CD8-positive, alpha-beta T cell (primary cell): ENCODE measurements at regions of chr16 and their contacts with region 1.

Region 1: GRCh38 chr16:67159593-67160406 is at the starts of genes FBXL8 and TRADD:
- DNase-seq: peak; percentile 53 to 90 (median 76)
- ATAC-seq: peak; percentile 69
- H3K4me3 ChIP-seq: peak within 1 kb of the TSS; percentile 94 to 97
- H3K4me3 Mint-ChIP-seq: peak within 1 kb of the TSS; percentile 89
- H3K27ac ChIP-seq: peak within 1 kb of the TSS; percentile 74 to 93
- H3K27ac Mint-ChIP-seq: peak within 1 kb of the TSS; percentile 95
- H3K4me1 ChIP-seq: peaks cover 72% of the 10 kb centered on the region
- H3K4me1 Mint-ChIP-seq: peaks cover 60% of the 10 kb centered on the region
- H3K27me3 ChIP-seq: peaks cover 13 to 33% of the 10 kb centered on the region in 2 experiments
- H3K27me3 Mint-ChIP-seq: peaks cover 20% of the 10 kb centered on the region
- CTCF ChIP-seq: peak; percentile 60
- total RNA-seq, gene FBXL8: 4.4 to 6.4 TPM
- total RNA-seq, gene TRADD: 15.5 to 17.1 TPM

Region 2: GRCh38 chr16:66947302-66948065 is 212.3 kb before region 1 on chr16:
- CTCF ChIA-PET with region 1: interaction called, 4 read pairs
- POLR2A ChIA-PET with region 1: no interaction called
- intact Hi-C with region 1: loop called (anchors 2 kb)
- DNase-seq: peak; percentile 67 to 90 (median 85)
- ATAC-seq: peak; percentile 94
- H3K4me3 ChIP-seq: peak overlapping the region; percentile 58 to 65
- H3K4me3 Mint-ChIP-seq: peak overlapping the region; percentile 89
- H3K27ac ChIP-seq: no peak overlapping the region
- H3K27ac Mint-ChIP-seq: no peak overlapping the region
- H3K4me1 ChIP-seq: peaks cover 17% of the 10 kb centered on the region
- H3K4me1 Mint-ChIP-seq: peaks cover 19% of the 10 kb centered on the region
- H3K27me3 ChIP-seq: peaks cover 0 to 19% of the 10 kb centered on the region in 2 experiments
- H3K27me3 Mint-ChIP-seq: peaks cover 22% of the 10 kb centered on the region
- CTCF ChIP-seq: peak; percentile 89

Region 3: DNA sequence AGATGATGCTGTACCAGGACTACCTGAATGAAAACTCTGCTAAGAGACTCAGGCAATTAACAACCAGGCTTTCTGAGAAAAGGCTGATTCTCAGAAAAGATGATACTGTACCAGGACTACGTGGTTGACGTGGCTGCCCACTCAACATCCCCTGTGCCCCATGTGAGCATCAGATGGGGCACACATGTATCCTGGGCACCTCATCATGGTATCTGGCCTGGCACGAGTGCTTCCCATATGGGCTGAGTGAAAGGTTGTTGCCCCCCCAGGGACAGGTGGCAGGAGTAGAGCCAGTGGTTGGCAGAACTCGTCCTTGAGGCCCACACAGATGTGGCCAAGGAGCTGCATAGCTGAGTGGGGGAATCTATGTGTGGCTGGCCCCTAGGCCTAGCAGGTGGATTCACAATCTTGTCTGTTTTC is 174.9 kb before region 1 on chr16:
- CTCF ChIA-PET with region 1: interaction called, 79 read pairs
- POLR2A ChIA-PET with region 1: no interaction called
- intact Hi-C with region 1: no loop called
- DNase-seq: peak in 1 of 9 experiments; percentile 16
- ATAC-seq: no peak
- H3K4me3 ChIP-seq: no peak overlapping the region
- H3K4me3 Mint-ChIP-seq: no peak overlapping the region
- H3K27ac ChIP-seq: peak overlapping the region in 1 of 2 experiments; percentile 71
- H3K27ac Mint-ChIP-seq: peak overlapping the region; percentile 25
- H3K4me1 ChIP-seq: peaks cover 15% of the 10 kb centered on the region
- H3K4me1 Mint-ChIP-seq: peaks cover 9% of the 10 kb centered on the region
- H3K27me3 ChIP-seq: no peaks in the 10 kb centered on the region
- H3K27me3 Mint-ChIP-seq: no peaks in the 10 kb centered on the region
- CTCF ChIP-seq: no peak

Region 4: GRCh38 chr16:67109407-67110135 is 50.2 kb before region 1 on chr16 and contains the start of gene PHAF1:
- CTCF ChIA-PET with region 1: interaction called, 11 read pairs
- POLR2A ChIA-PET with region 1: interaction called, 3 read pairs
- intact Hi-C with region 1: loop called (anchors 2 kb)
- DNase-seq: peak; percentile 91 to 99 (median 96)
- ATAC-seq: peak; percentile 93
- H3K4me3 ChIP-seq: peak within 1 kb of the TSS; percentile 83 to 92
- H3K4me3 Mint-ChIP-seq: peak within 1 kb of the TSS; percentile 95
- H3K27ac ChIP-seq: peak within 1 kb of the TSS; percentile 26 to 51
- H3K27ac Mint-ChIP-seq: peak within 1 kb of the TSS; percentile 89
- H3K4me1 ChIP-seq: peaks cover 19% of the 10 kb centered on the region
- H3K4me1 Mint-ChIP-seq: peaks cover 32% of the 10 kb centered on the region
- H3K27me3 ChIP-seq: no peaks in the 10 kb centered on the region
- H3K27me3 Mint-ChIP-seq: no peaks in the 10 kb centered on the region
- CTCF ChIP-seq: no peak
- total RNA-seq, gene PHAF1: 9.6 to 9.7 TPM

Region 5: GRCh38 chr16:67146523-67147357 is 13.1 kb before region 1 on chr16:
- CTCF ChIA-PET with region 1: interaction called, 20 read pairs
- POLR2A ChIA-PET with region 1: interaction called, 4 read pairs
- intact Hi-C with region 1: no loop called
- DNase-seq: no peak
- ATAC-seq: no peak
- H3K4me3 ChIP-seq: no peak overlapping the region
- H3K4me3 Mint-ChIP-seq: no peak overlapping the region
- H3K27ac ChIP-seq: no peak overlapping the region
- H3K27ac Mint-ChIP-seq: no peak overlapping the region
- H3K4me1 ChIP-seq: peaks cover 4% of the 10 kb centered on the region
- H3K4me1 Mint-ChIP-seq: peaks cover 8% of the 10 kb centered on the region
- H3K27me3 ChIP-seq: no peaks in the 10 kb centered on the region
- H3K27me3 Mint-ChIP-seq: peaks cover 6% of the 10 kb centered on the region
- CTCF ChIP-seq: no peak

Region 6: GRCh38 chr16:67226804-67227557 is 67.2 kb after region 1 on chr16 and contains the start of gene TMEM208:
- CTCF ChIA-PET with region 1: interaction called, 5 read pairs
- POLR2A ChIA-PET with region 1: interaction called, 3 read pairs
- intact Hi-C with region 1: loop called (anchors 1 to 2 kb)
- DNase-seq: peak; percentile 95 to 99 (median 98)
- ATAC-seq: peak; percentile 98
- H3K4me3 ChIP-seq: peak within 1 kb of the TSS; percentile 95 to 100
- H3K4me3 Mint-ChIP-seq: peak within 1 kb of the TSS; percentile 100
- H3K27ac ChIP-seq: peak within 1 kb of the TSS; percentile 83 to 93
- H3K27ac Mint-ChIP-seq: peak within 1 kb of the TSS; percentile 98
- H3K4me1 ChIP-seq: peaks cover 26% of the 10 kb centered on the region
- H3K4me1 Mint-ChIP-seq: peaks cover 47% of the 10 kb centered on the region
- H3K27me3 ChIP-seq: no peaks in the 10 kb centered on the region
- H3K27me3 Mint-ChIP-seq: no peaks in the 10 kb centered on the region
- CTCF ChIP-seq: no peak
- total RNA-seq, gene TMEM208: 37.1 to 44.7 TPM